Activated CD4-positive, alpha-beta T cell treated with anti-CD3 and anti-CD28 coated beads, Interleukin-2, amount 10 ng/mL, durations not matched to agents 24 days and 14 days (primary cell): ENCODE measurements at regions of chr2 and their contacts with region 1.

Region 1: DNA sequence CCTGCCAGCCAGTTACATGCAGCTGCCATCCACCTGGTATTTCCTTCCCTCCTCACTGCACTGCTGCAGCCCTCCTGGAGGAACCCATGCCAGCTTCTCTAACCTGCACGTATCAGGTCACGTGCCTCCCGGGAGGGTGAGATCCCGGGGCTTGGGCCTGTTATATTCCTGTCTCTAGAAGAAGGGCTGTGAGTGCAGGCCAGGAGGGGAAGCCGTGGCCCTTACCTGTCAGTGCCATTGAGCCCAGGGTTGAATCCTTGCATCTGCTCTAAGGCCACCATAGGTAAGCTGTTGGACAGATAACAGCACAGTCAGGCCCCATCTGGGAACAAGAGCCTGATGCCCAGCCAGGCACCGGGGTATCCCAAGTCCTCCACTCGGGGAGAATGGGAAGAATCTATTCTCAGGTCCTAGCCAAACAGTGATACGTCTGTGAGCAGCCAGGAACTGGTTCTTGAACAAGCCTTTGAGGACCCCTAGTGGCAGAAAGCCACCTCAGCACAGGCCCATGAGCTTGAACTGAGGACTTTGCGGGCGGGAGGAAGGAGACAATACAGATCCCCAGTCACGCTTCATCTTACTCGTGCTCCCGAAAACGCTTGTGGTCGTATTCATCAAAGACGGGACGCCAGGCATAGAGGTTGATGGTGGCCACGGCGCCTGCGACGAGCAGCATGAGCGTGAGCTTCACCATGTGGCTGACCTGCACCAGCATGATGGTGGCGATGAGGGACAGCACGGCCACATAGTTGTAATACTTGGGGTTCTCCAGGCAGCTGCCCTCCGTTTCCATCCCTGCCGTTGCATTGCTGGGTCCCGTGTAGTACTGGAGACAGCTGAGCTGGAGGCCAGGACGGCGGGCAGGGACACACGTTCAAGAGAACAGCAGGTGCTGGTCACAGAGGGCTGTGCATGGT is 34.4 kb downstream of the CENPO start:
- DNase-seq: peak; percentile 92
- H3K4me3 Mint-ChIP-seq: no peak overlapping the region
- H3K27ac Mint-ChIP-seq: peak overlapping the region; percentile 93
- H3K4me1 Mint-ChIP-seq: peaks cover 23% of the 10 kb centered on the region
- H3K27me3 Mint-ChIP-seq: no peaks in the 10 kb centered on the region

Region 2: DNA sequence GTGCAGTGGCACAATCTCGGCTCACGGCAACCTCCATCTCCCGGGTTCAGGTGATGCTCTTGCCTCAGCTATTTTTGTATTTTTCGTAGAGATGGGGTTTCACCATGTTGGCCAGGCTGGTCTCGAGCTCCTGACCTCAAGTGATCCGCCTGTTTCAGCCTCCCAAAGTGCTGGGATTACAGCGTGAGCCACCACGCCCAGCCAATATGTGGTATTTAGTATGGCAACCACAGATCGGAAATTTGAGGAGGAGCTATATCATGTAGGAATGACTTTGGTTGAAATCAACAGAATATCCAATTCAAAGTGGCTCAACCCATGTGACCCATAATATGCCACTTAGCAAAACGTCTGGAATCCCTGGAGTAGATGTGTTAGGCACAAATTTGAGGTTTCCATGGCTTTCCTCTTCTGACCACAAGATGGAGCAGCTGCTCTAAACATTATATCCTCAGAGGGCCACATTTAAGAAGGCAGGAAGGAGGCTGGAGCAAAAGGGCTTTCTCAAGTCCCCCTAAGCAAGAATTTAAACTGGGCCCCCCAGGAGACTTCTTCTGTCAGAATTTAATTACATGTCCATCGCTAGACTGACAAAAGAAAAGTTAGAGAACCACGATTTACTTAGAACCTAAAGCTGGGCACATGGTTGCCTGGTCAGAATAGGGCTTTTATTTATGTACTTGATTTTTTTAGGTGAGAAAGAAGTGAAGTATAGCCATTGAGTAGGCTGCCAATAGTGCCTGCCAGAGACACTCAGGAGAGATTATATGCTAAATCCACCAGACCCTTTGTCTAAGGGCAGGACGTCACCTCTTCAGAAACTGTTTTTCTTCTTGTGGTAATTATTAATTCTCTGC is 417.7 kb before region 1 on chr2:
- intact Hi-C with region 1: loop called (anchors 1 kb)
- DNase-seq: peak; percentile 82
- H3K4me3 Mint-ChIP-seq: no peak overlapping the region
- H3K27ac Mint-ChIP-seq: no peak overlapping the region
- H3K4me1 Mint-ChIP-seq: peaks cover 2% of the 10 kb centered on the region
- H3K27me3 Mint-ChIP-seq: peaks cover 4% of the 10 kb centered on the region

Region 3: GRCh38 chr2:24490674-24491625 is 336.6 kb before region 1 on chr2 and contains the start of gene NCOA1:
- intact Hi-C with region 1: loop called (anchors 2 kb)
- DNase-seq: peak; percentile 97
- H3K4me3 Mint-ChIP-seq: peak within 1 kb of the TSS; percentile 96
- H3K27ac Mint-ChIP-seq: peak within 1 kb of the TSS; percentile 92
- H3K4me1 Mint-ChIP-seq: peaks cover 40% of the 10 kb centered on the region
- H3K27me3 Mint-ChIP-seq: peaks cover 2% of the 10 kb centered on the region
- total RNA-seq, gene NCOA1: 24.6 and 25.9 TPM in 2 replicates

Region 4: DNA sequence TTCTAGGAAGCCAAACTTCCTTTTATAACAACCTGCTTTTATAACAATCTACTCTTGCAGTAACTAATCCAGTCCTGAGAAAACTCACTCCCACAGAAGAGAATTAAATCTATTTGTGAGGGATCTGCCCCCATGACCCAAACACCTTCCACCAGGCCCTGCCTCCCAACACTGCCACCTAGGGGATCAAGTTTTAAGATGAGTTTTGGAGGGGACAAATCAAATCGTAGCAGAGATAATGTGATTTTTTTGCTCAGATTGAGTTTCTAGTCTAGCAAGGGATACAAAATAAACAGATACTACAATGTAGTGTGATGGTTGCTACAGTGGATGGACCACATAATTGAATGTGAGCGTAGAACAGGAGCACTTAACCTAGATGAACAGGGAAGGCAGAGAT is 284.3 kb before region 1 on chr2:
- intact Hi-C with region 1: no loop called
- DNase-seq: no peak
- H3K4me3 Mint-ChIP-seq: no peak overlapping the region
- H3K27ac Mint-ChIP-seq: no peak overlapping the region
- H3K4me1 Mint-ChIP-seq: peaks cover 17% of the 10 kb centered on the region
- H3K27me3 Mint-ChIP-seq: no peaks in the 10 kb centered on the region

Region 5: DNA sequence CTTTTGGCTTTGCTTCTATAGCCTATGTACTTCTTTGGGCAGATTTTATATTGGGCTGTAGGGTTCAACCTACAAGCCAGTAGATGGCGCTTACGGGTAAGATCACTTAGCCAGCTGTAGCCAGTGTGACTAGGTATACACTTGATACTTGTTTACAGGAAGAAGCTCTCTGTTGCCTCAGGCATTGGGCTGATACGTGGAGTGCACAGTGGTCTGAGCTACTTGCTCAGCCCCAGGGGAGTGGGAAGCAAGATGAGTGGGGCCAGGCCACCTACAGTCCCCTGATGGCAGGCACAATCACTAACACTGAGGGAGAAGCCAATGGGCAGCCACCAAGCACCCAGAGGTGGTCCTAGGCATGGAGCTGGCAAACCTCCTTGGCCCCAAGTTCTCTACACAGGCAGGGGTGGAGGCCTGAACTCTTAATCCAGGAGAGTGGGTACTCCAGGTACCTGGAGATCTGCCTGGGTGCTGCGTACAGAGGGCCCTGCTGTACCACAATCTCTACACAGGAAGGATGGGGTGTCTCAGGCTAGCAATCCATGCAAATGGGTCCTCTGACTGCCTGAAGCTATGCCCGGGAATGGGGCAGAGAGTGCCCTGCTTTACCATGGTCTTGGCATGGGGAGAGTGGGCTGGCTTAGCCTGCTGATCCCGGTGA is 214.3 kb before region 1 on chr2:
- intact Hi-C with region 1: loop called (anchors 1 kb)
- DNase-seq: peak; percentile 83
- H3K4me3 Mint-ChIP-seq: no peak overlapping the region
- H3K27ac Mint-ChIP-seq: peak overlapping the region; percentile 79
- H3K4me1 Mint-ChIP-seq: peaks cover 11% of the 10 kb centered on the region
- H3K27me3 Mint-ChIP-seq: no peaks in the 10 kb centered on the region

Region 6: GRCh38 chr2:24850944-24851343 is 23.4 kb after region 1 on chr2:
- intact Hi-C with region 1: no loop called
- DNase-seq: no peak
- H3K4me3 Mint-ChIP-seq: no peak overlapping the region
- H3K27ac Mint-ChIP-seq: no peak overlapping the region
- H3K4me1 Mint-ChIP-seq: peaks cover 2% of the 10 kb centered on the region
- H3K27me3 Mint-ChIP-seq: no peaks in the 10 kb centered on the region

Region 7: DNA sequence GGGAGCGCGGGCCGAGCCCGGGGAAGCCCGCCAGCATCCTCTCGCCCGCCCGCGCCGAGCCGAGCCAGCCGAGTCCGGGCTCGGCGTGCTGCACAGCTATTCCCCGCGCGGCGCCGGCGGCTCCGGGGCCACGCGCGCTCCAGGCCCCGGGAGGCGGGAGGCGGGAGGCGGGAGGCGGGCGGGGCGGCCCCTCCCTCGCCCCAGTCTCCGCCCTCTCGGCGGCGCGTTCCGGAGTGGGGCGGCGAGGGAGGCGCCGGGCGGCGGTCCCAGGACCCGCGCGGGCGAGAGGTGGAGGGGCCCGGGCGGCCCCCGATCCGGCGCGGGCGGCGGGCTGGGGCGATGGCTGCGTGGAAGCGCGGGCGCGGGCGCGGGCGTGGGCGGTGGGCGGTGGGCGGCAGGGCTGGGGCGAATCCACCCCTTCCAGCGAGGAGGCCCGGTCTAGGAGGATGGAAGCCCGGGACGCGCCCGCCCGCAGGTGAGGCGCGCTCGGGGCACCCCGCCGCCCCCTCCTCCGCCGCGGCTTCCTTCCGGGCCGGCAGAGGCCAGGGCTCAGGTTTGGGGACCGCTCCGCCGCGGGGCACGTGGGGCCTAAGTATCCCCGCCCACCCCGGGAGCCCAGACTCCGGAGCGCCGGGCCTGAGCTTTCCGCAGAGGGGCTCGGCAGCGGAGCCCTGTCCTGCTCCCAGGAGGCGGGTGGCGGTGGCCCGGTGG is 92.7 kb after region 1 on chr2 and contains the start of gene ADCY3:
- intact Hi-C with region 1: loop called (anchors 5 kb)
- DNase-seq: peak; percentile 90
- H3K4me3 Mint-ChIP-seq: peak within 1 kb of the TSS; percentile 90
- H3K27ac Mint-ChIP-seq: peak within 1 kb of the TSS; percentile 69
- H3K4me1 Mint-ChIP-seq: peaks cover 29% of the 10 kb centered on the region
- H3K27me3 Mint-ChIP-seq: peaks cover 6% of the 10 kb centered on the region
- total RNA-seq, gene ADCY3: 103 and 108 TPM in 2 replicates

Region 8: GRCh38 chr2:25131567-25132298 is 304.2 kb after region 1 on chr2:
- intact Hi-C with region 1: loop called (anchors 2 kb)
- DNase-seq: peak; percentile 70
- H3K4me3 Mint-ChIP-seq: peak overlapping the region; percentile 77
- H3K27ac Mint-ChIP-seq: no peak overlapping the region
- H3K4me1 Mint-ChIP-seq: peaks cover 15% of the 10 kb centered on the region
- H3K27me3 Mint-ChIP-seq: peaks cover 57% of the 10 kb centered on the region